Activated B cell treated with CpG ODN at 0.5 μM for 24 hours (primary cell): ENCODE measurements at regions of chr4 and their contacts with region 1.

Region 1: DNA sequence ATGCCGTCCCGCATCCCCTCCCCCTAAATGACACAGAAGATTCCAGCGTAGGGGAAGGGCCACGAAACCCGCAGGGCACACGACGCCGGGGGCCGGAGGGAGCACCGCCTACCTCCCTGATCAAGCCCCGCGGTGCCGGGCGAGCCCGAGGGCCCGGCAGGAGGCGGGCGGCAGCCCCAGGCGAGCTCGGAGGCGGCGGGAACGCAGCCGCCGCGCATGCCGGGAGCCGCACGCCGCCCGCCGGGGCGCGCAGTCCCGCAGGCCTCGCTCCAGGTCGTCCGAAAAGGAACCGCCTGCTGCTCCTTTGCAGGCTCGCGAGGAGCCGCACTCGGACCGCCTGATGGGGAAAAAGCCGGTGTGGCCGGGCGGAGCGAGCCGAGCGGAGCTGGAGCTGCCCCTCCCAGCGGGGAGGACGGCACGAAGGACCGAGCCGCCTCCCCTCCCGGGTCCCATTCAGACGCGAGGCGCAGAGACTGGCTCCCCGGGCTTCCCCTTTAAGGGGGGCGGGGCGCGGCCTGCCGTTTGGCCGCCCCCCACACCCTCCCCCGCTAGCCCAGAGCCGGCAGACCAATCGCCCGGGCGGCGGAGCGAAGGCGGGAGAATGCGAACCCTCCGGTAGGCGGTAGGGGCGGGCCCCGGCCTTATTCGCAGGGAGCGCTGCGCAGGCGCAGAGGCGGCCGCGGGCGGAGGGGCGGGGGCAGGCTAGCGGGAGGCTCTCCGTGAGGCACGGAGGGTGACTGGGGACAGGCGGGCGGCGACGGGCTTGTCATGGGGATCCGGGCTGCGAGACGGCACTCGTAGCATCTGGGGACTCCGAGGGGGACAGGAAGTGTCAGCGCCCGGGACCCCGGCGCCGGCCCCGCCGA is 561 bp upstream of the ING2 start:
- DNase-seq: peak; percentile 100
- ATAC-seq: peak; percentile 82
- H3K4me3 Mint-ChIP-seq: peak overlapping the region; percentile 96
- H3K27ac Mint-ChIP-seq: peak overlapping the region; percentile 90
- H3K4me1 Mint-ChIP-seq: peaks cover 14% of the 10 kb centered on the region
- H3K27me3 Mint-ChIP-seq: no peaks in the 10 kb centered on the region
- CTCF ChIP-seq: no peak

Region 2: GRCh38 chr4:182917182-182918043 is 586.9 kb before region 1 on chr4 and contains the start of gene DCTD:
- CTCF ChIA-PET with region 1: no interaction called
- POLR2A ChIA-PET with region 1: interaction called, 8 read pairs
- intact Hi-C with region 1: loop called (anchors 1 kb)
- DNase-seq: peak; percentile 80
- ATAC-seq: peak; percentile 79
- H3K4me3 Mint-ChIP-seq: peak within 1 kb of the TSS; percentile 93
- H3K27ac Mint-ChIP-seq: peak within 1 kb of the TSS; percentile 94
- H3K4me1 Mint-ChIP-seq: peaks cover 33% of the 10 kb centered on the region
- H3K27me3 Mint-ChIP-seq: peaks cover 4% of the 10 kb centered on the region
- CTCF ChIP-seq: no peak
- total RNA-seq, gene DCTD: 75.7 and 76.8 TPM in 2 replicates

Region 3: GRCh38 chr4:183287677-183288076 is 216.6 kb before region 1 on chr4:
- CTCF ChIA-PET with region 1: no interaction called
- POLR2A ChIA-PET with region 1: no interaction called
- intact Hi-C with region 1: no loop called
- DNase-seq: no peak
- ATAC-seq: no peak
- H3K4me3 Mint-ChIP-seq: no peak overlapping the region
- H3K27ac Mint-ChIP-seq: no peak overlapping the region
- H3K4me1 Mint-ChIP-seq: no peaks in the 10 kb centered on the region
- H3K27me3 Mint-ChIP-seq: peaks cover 2% of the 10 kb centered on the region
- CTCF ChIP-seq: no peak

Region 4: GRCh38 chr4:183444214-183445066 is 59.9 kb before region 1 on chr4 and contains the start of gene CDKN2AIP:
- CTCF ChIA-PET with region 1: interaction called, 3 read pairs
- POLR2A ChIA-PET with region 1: interaction called, 41 read pairs
- intact Hi-C with region 1: loop called (anchors 1 kb)
- DNase-seq: peak; percentile 93
- ATAC-seq: peak; percentile 86
- H3K4me3 Mint-ChIP-seq: peak within 1 kb of the TSS; percentile 95
- H3K27ac Mint-ChIP-seq: peak within 1 kb of the TSS; percentile 95
- H3K4me1 Mint-ChIP-seq: peaks cover 36% of the 10 kb centered on the region
- H3K27me3 Mint-ChIP-seq: no peaks in the 10 kb centered on the region
- CTCF ChIP-seq: no peak
- total RNA-seq, gene CDKN2AIP: 19.9 and 21.8 TPM in 2 replicates

Region 5: DNA sequence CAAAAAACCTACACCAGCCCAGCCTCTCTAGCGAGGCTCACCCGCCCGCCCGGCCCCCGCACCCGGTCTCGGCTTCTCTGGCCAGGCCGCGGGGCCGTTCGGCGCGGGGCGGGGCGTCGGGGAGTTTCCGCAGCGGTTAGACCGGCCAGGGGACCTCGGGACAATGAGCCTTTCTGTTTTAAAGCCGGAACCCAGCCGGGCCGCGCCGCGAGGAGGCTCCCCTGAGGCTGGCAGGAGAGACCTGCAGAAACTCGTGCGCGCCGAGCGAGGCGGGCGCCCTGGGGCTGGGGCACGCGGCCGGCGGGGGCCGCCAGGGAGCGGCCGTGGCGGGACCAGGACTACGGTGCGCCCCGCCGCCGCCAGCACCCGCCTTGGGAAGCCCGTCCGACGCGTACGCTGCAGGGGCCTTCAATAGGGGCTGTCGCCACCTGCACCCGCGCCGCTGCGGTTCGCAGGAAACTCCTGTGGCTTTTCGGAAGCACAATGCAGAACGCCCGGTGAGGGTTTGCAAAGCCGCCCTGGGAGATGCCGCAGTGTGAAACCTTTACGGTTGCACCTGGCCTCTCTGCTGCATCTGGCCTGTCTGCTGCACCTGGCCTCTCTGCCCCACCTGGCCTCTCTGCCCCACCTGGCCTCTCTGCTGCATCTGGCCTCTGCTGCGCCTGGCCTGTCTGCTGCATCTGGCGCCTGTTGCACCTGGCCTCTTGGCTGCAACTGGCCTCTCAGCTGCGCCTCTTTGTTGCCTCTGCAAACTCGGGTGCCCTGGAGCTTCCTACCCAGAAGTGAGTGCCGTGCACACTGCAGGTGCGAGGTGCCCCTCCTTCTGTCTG is 218.6 kb after region 1 on chr4:
- CTCF ChIA-PET with region 1: no interaction called
- POLR2A ChIA-PET with region 1: no interaction called
- intact Hi-C with region 1: loop called (anchors 2 kb)
- DNase-seq: peak; percentile 34
- ATAC-seq: peak; percentile 64
- H3K4me3 Mint-ChIP-seq: peak overlapping the region; percentile 77
- H3K27ac Mint-ChIP-seq: peak overlapping the region; percentile 30
- H3K4me1 Mint-ChIP-seq: peaks cover 12% of the 10 kb centered on the region
- H3K27me3 Mint-ChIP-seq: peaks cover 6% of the 10 kb centered on the region
- CTCF ChIP-seq: no peak

Region 6: DNA sequence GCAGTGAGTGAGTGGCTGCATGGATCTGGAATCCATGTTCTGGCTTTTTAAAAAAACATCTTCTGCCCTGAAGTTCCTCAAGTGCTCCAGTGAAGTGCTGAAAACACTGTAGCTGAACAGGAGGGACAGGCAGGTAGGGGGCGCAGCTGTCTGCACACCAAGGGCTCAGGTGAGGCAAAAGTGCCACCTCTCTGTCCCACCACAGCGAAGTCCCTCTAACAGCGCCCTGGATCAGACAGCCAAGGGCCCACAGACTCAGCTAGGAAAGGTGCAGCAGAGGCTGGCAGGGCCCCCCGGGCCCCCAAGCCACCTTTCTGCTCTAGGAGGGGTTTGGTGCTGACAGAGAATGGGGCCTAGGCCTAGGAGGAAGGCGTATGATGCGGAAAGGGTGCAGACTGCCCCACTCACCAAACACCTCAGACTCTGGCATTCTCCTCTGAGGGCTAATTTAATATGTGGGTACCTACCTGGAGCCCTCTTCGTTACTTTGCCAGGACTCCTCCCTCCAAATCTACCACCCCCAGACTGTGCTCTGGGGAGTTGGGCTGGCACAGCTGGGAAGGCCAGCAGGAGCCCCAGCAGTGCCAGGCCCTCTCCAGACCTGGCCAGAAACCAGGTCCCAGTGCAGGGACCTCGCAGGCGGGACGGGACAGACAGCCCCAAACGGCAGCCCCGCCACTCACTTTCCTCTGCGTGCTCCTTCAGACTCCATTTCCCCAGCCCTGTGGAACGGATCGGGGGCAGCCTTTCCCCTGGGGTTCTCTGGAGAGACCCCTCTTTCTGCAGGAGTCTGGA is 639.7 kb after region 1 on chr4:
- CTCF ChIA-PET with region 1: no interaction called
- POLR2A ChIA-PET with region 1: no interaction called
- intact Hi-C with region 1: no loop called
- DNase-seq: no peak
- ATAC-seq: no peak
- H3K4me3 Mint-ChIP-seq: no peak overlapping the region
- H3K27ac Mint-ChIP-seq: no peak overlapping the region
- H3K4me1 Mint-ChIP-seq: no peaks in the 10 kb centered on the region
- H3K27me3 Mint-ChIP-seq: peaks cover 7% of the 10 kb centered on the region
- CTCF ChIP-seq: no peak

Region 7: DNA sequence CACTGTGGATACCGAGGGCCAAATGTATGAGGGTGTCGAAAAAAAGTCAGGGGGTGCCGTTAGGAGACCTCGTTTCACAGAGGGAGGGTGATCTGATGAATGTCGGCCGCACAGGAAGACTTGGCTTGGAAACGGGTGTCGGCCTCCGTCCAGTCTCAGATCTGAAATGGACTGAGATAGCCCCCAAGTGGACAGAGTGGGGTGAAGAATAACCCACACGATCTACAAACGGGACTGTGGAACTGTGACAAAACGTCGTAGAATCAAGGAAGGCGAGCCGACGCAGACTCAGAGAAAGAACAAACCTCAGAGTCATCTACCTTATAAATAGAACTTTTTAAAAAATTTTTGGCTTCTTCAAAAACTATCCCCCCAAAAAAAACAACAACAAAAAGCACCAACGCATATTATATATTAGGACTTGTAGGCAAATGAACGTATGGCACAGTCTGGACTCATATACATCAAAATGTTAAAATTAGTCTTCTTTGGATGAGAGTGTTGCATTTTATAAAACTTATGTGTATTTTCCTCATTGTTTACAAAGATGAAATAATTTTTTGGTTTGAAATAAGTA is 1033.8 kb after region 1 on chr4:
- CTCF ChIA-PET with region 1: no interaction called
- POLR2A ChIA-PET with region 1: no interaction called
- intact Hi-C with region 1: loop called (anchors 2 kb)
- DNase-seq: peak; percentile 54
- ATAC-seq: peak; percentile 68
- H3K4me3 Mint-ChIP-seq: peak overlapping the region; percentile 96
- H3K27ac Mint-ChIP-seq: peak overlapping the region; percentile 100
- H3K4me1 Mint-ChIP-seq: peaks cover 49% of the 10 kb centered on the region
- H3K27me3 Mint-ChIP-seq: no peaks in the 10 kb centered on the region
- CTCF ChIP-seq: no peak

Region 8: DNA sequence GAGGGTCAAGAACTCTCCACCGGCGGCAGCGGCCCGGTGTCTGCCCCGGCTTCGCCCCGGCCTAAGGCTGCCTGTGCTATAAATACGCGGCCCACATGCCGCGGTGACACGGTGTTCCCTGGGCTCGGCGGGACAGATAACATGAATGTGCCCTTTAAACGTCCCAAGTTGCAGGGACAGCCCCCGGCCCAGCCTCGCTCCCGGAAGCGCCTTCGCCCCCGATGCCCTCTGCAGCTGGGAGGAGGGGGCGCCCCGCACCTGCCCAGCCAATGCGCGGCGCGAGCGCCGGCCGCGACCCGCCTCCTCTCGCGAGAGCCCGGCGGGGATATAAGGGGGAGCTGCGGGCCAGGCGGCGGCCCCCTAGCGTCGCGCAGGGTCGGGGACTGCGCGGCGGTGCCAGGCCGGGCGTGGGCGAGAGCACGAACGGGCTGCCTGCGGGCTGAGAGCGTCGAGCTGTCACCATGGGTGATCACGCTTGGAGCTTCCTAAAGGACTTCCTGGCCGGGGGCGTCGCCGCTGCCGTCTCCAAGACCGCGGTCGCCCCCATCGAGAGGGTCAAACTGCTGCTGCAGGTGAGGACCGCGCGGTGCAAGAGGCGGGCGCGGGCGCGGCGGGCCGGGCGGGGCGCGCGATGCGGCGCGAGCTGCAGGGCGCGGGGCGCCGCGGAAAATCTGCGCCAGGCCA is 1638.8 kb after region 1 on chr4 and contains the start of gene SLC25A4:
- CTCF ChIA-PET with region 1: no interaction called
- POLR2A ChIA-PET with region 1: interaction called, 3 read pairs
- intact Hi-C with region 1: loop called (anchors 10 kb)
- DNase-seq: peak; percentile 92
- ATAC-seq: peak; percentile 97
- H3K4me3 Mint-ChIP-seq: peak within 1 kb of the TSS; percentile 93
- H3K27ac Mint-ChIP-seq: peak within 1 kb of the TSS; percentile 94
- H3K4me1 Mint-ChIP-seq: peaks cover 13% of the 10 kb centered on the region
- H3K27me3 Mint-ChIP-seq: peaks cover 5% of the 10 kb centered on the region
- CTCF ChIP-seq: no peak
- total RNA-seq, gene SLC25A4: 8.9 and 9.4 TPM in 2 replicates